ENCODE measurements at regions of chr2 and their contacts with region 1.

Region 1: DNA sequence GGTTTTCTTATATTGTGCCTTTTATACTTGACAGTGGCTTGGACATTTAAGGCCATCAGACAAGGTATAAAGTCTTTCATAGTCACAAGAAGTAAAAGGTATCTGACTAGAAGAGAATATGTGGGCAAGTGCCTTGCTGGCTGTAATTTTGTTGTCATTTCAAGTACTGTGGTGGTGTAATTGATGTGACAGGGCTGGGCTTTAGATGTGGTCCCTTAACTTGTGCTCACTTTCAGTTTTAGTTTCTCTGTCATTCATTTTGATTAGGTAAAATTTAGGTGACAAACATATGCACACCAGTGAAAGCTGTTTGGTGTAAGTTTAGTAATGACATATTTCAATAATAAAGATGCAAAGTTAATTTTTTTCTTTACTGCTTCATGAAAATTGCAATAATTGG is 31.2 kb upstream of the TBR1 start:
- DNase-seq: peak; percentile 49
- ATAC-seq: peak; percentile 88
- H3K4me3 ChIP-seq: no peak overlapping the region
- H3K27ac ChIP-seq: no peak overlapping the region
- H3K4me1 ChIP-seq: peaks cover 37% of the 10 kb centered on the region
- H3K27me3 ChIP-seq: no peaks in the 10 kb centered on the region
- CTCF ChIP-seq: no peak
- EP300 ChIP-seq: peak in 1 of 2 experiments; percentile 75; a peak in 2 of 4 replicates
- POLR2A ChIP-seq: no peak
- RAD21 ChIP-seq: no peak

Region 2: GRCh38 chr2:161077367-161078210 is 307.3 kb before region 1 on chr2:
- CTCF ChIA-PET with region 1: no interaction called
- POLR2A ChIA-PET with region 1: no interaction called
- RAD21 ChIA-PET with region 1: no interaction called
- SMC1A ChIA-PET with region 1: no interaction called
- in situ Hi-C with region 1: no loop called
- intact Hi-C with region 1: loop called (anchors 5 kb)
- DNase-seq: peak; percentile 81
- ATAC-seq: peak; percentile 90
- H3K4me3 ChIP-seq: no peak overlapping the region
- H3K27ac ChIP-seq: peak overlapping the region; percentile 71
- H3K4me1 ChIP-seq: peaks cover 20% of the 10 kb centered on the region
- H3K27me3 ChIP-seq: no peaks in the 10 kb centered on the region
- CTCF ChIP-seq: no peak
- EP300 ChIP-seq: peak; percentile 70 to 74
- POLR2A ChIP-seq: no peak
- RAD21 ChIP-seq: 0 out of 2 replicates have a peak, but pooled peaks have one; percentile 5

Region 3: GRCh38 chr2:161160226-161161069 is 224.4 kb before region 1 on chr2 and contains the start of gene TANK:
- CTCF ChIA-PET with region 1: no interaction called
- POLR2A ChIA-PET with region 1: interaction called, 4 read pairs
- RAD21 ChIA-PET with region 1: no interaction called
- SMC1A ChIA-PET with region 1: no interaction called
- in situ Hi-C with region 1: no loop called
- intact Hi-C with region 1: loop called (anchors 10 kb)
- DNase-seq: peak; percentile 83
- ATAC-seq: peak; percentile 90
- H3K4me3 ChIP-seq: peak within 1 kb of the TSS; percentile 93
- H3K27ac ChIP-seq: peak within 1 kb of the TSS; percentile 89
- H3K4me1 ChIP-seq: peaks cover 25% of the 10 kb centered on the region
- H3K27me3 ChIP-seq: no peaks in the 10 kb centered on the region
- CTCF ChIP-seq: no peak
- EP300 ChIP-seq: no peak
- POLR2A ChIP-seq: peak; percentile 96
- RAD21 ChIP-seq: no peak
- polyA plus RNA-seq, gene TANK: 102 to 127 TPM

Region 4: GRCh38 chr2:161238560-161239325 is 146.1 kb before region 1 on chr2:
- CTCF ChIA-PET with region 1: no interaction called
- POLR2A ChIA-PET with region 1: no interaction called
- RAD21 ChIA-PET with region 1: no interaction called
- SMC1A ChIA-PET with region 1: no interaction called
- in situ Hi-C with region 1: no loop called
- intact Hi-C with region 1: loop called (anchors 5 kb)
- DNase-seq: no peak
- ATAC-seq: peak; percentile 44
- H3K4me3 ChIP-seq: peak overlapping the region; percentile 76
- H3K27ac ChIP-seq: peak overlapping the region; percentile 31
- H3K4me1 ChIP-seq: peaks cover 20% of the 10 kb centered on the region
- H3K27me3 ChIP-seq: no peaks in the 10 kb centered on the region
- CTCF ChIP-seq: no peak
- EP300 ChIP-seq: no peak
- POLR2A ChIP-seq: 0 out of 2 replicates have a peak, but pooled peaks have one; percentile 29
- RAD21 ChIP-seq: no peak

Region 5: DNA sequence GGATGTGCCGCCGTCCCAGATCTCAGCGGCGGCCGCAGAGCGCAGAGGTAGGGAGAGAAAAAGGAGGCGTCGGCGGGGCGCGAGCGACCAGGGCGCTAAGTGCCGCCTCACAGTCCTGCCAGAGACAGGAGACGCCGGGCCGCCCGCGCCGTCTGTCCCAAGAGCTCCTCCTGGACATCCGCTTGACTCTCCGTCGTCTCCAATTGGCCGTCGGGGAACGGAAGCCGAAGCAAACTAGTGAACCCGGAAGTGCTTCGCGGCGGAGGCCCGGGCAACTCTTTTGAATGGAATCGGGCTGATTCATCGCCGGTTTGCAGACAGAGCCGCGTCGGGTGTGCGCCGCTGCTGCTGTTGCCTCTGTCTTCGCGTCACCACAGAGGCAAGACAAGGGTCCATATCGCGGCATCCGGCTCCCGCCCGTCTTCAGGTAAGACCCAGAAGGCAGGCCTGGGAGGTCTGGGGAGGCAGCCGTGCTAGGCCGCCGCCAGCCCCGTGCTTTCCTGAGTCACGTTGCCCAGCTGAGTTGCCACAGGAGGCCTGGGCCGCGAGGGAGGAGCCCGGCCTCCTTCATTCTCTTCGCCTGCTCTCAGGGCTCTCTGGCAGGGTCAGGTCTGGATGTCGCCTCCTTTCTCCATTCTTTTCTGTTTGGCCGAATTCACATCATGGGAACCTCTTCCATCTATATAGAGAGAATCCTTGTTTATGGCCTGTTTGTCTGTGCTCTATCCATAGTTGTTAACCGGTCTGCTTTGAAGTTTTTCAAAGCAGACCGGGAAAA is 76.5 kb before region 1 on chr2 and contains the start of gene PSMD14:
- CTCF ChIA-PET with region 1: no interaction called
- POLR2A ChIA-PET with region 1: interaction called, 11 read pairs
- RAD21 ChIA-PET with region 1: interaction called, 4 read pairs
- SMC1A ChIA-PET with region 1: interaction called, 4 read pairs
- in situ Hi-C with region 1: no loop called
- intact Hi-C with region 1: loop called (anchors 5 kb)
- DNase-seq: peak; percentile 63
- ATAC-seq: peak; percentile 95
- H3K4me3 ChIP-seq: peak within 1 kb of the TSS; percentile 86
- H3K27ac ChIP-seq: peak within 1 kb of the TSS; percentile 92
- H3K4me1 ChIP-seq: no peaks in the 10 kb centered on the region; the same call in 1 of the 2 replicates
- H3K27me3 ChIP-seq: no peaks in the 10 kb centered on the region
- CTCF ChIP-seq: no peak
- EP300 ChIP-seq: no peak
- POLR2A ChIP-seq: peak; percentile 95
- RAD21 ChIP-seq: no peak
- polyA plus RNA-seq, gene PSMD14: 225 to 253 TPM

Region 6: DNA sequence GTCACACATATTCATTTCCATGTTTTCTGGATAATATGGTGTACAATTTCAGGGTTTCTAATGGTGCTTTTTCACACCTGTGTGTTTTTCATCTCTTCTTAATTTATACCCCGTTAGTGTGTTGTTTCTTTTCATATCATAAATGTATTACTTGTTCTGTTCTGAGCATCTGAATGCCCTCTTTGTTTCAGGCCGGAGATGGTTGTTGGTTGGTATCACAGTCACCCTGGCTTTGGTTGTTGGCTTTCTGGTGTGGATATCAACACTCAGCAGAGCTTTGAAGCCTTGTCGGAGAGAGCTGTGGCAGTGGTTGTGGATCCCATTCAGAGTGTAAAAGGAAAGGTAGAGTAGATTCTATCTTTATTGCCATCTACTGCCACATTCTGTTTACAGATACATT is 13.9 kb before region 1 on chr2:
- CTCF ChIA-PET with region 1: interaction called, 5 read pairs
- POLR2A ChIA-PET with region 1: interaction called, 4 read pairs
- RAD21 ChIA-PET with region 1: interaction called, 3 read pairs
- SMC1A ChIA-PET with region 1: interaction called, 13 read pairs
- in situ Hi-C with region 1: no loop called
- intact Hi-C with region 1: no loop called
- DNase-seq: no peak
- ATAC-seq: no peak
- H3K4me3 ChIP-seq: no peak overlapping the region
- H3K27ac ChIP-seq: no peak overlapping the region
- H3K4me1 ChIP-seq: no peaks in the 10 kb centered on the region
- H3K27me3 ChIP-seq: no peaks in the 10 kb centered on the region
- CTCF ChIP-seq: no peak
- EP300 ChIP-seq: no peak
- POLR2A ChIP-seq: no peak
- RAD21 ChIP-seq: no peak

Region 7: DNA sequence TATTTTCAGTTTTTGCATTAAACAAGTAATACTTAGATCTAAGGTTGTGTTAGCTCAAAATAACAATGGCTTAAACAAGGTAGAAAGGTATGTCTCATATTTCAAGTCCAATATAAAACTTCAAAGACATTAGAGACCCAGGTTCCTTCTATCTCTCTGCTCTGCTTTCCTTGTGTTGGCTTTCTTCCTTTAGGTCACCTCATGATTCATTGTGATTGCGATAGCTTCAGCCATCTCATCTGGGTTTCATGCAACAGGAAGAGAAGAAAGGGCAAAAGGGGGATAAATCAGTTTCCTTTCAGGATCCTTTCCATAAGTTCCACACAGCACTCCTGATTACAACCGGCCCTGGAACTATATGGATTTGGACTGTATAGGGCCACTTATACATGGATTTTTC is 15.2 kb after region 1 on chr2:
- CTCF ChIA-PET with region 1: interaction called, 10 read pairs
- POLR2A ChIA-PET with region 1: no interaction called
- RAD21 ChIA-PET with region 1: no interaction called
- SMC1A ChIA-PET with region 1: interaction called, 12 read pairs
- in situ Hi-C with region 1: no loop called
- intact Hi-C with region 1: no loop called
- DNase-seq: no peak
- ATAC-seq: no peak
- H3K4me3 ChIP-seq: no peak overlapping the region
- H3K27ac ChIP-seq: no peak overlapping the region
- H3K4me1 ChIP-seq: no peaks in the 10 kb centered on the region
- H3K27me3 ChIP-seq: no peaks in the 10 kb centered on the region
- CTCF ChIP-seq: no peak
- EP300 ChIP-seq: no peak
- POLR2A ChIP-seq: no peak
- RAD21 ChIP-seq: no peak

Region 8: GRCh38 chr2:161796192-161796591 is 411.3 kb after region 1 on chr2:
- CTCF ChIA-PET with region 1: no interaction called
- POLR2A ChIA-PET with region 1: no interaction called
- RAD21 ChIA-PET with region 1: no interaction called
- SMC1A ChIA-PET with region 1: no interaction called
- in situ Hi-C with region 1: no loop called
- intact Hi-C with region 1: no loop called
- DNase-seq: no peak
- ATAC-seq: no peak
- H3K4me3 ChIP-seq: no peak overlapping the region
- H3K27ac ChIP-seq: no peak overlapping the region
- H3K4me1 ChIP-seq: no peaks in the 10 kb centered on the region
- H3K27me3 ChIP-seq: no peaks in the 10 kb centered on the region
- CTCF ChIP-seq: no peak
- EP300 ChIP-seq: no peak
- POLR2A ChIP-seq: no peak
- RAD21 ChIP-seq: no peak

Measured in GM12878 (cell line).